KBM-7 (cell line): ENCODE measurements at regions of chr10 and their contacts with region 1.

Region 1: DNA sequence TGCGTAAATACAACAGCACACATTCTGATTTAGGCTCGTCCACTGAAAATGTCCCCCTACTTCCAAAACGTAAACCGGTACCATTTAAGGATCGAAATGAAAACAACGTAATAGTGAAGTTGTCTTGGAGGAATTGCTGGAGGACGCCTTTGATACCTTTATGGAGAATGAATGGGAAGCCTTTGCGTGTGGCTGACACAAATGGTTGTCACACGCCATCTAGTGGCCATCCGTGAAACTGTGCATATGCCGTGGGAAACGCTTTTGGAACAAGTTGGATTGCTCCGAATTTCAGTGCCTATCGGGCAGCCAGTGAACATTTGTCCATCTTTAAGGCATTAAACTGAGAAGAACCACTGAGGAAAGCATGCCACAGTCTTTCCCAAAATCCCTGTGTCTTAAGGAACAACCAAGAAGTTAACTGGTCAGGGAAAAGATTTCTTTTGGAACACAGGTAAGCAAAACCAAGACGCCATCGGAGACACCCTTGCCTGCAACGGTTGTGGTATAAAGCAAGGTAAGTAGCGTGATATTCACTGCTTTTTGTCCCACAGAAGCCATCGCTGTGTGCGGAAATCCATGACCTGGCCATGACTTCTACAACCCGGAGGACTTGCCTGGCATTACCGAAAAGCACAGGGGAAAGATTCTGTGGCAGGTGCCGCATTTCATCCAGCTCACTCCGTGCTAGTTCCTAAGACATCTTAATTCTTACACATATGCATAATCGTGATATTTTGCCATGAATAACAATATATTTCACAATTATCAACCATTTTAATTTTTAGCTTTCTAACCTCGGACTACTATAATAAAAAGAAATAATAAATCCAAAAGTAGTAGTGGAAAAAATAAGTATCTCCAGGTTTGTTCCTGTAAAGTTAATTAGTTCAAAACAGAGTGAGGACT is 100.6 kb downstream of the FAM204A start:
- DNase-seq: peak; percentile 71

Region 2: GRCh38 chr10:117537436-117537903 is 704.0 kb before region 1 on chr10:
- in situ Hi-C with region 1: loop called (anchors 25 kb)
- DNase-seq: peak; percentile 32

Region 3: DNA sequence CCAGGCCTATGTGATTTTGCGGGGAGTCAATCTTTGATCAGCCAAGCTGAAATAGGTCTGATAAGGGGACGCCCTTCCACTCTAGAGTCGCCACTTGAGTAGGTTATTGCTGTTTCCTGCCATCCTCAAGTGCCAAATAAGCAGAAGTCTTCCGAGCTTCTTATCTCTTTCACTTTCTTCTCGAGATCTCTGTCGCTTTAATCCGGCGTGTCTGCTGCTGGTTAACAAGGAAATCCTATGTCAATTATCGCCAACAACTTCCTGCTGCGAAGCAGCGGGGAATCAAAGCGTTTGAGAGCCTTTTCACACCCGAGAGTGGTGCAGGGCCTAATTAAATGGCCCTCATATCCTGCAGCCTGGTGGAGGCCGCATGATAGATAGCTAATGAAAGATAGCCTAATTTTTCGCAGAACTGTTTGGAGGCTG is 410.7 kb before region 1 on chr10:
- in situ Hi-C with region 1: no loop called
- DNase-seq: peak; percentile 50

Region 4: GRCh38 chr10:119341459-119342301 is 1100.2 kb after region 1 on chr10:
- in situ Hi-C with region 1: no loop called
- DNase-seq: no peak